Heart left ventricle (tissue), 16 donors: ENCODE measurements at regions of chr6 and their contacts with region 1.

Region 1: DNA sequence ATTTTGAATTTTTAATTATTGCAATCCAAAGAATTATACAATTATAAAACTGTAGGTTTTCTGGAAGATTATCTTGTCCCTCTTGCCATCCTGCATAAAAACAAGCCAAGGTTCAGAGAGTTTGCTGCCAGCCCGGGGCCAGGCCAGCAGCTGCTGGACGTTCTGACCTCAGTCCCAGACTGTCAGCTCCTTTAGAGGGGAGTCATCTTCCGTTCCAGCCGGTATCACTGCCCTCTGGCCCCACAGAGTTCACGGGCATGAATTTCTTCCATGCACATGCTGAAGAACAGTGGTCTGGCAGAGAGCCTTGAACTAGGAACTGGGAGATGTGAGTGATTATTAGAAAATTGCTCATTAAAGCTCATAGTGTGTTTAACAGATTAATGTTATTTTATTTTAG is 130.4 kb upstream of the QKI start:
- DNase-seq: no peak
- ATAC-seq: no peak
- H3K4me3 ChIP-seq: no peak overlapping the region
- H3K27ac ChIP-seq: no peak overlapping the region
- H3K4me1 ChIP-seq: peaks cover 0 to 11% (median 0%) of the 10 kb centered on the region in 12 donors
- H3K27me3 ChIP-seq: no peaks in the 10 kb centered on the region
- CTCF ChIP-seq: no peak
- POLR2A ChIP-seq: no peak

Region 2: DNA sequence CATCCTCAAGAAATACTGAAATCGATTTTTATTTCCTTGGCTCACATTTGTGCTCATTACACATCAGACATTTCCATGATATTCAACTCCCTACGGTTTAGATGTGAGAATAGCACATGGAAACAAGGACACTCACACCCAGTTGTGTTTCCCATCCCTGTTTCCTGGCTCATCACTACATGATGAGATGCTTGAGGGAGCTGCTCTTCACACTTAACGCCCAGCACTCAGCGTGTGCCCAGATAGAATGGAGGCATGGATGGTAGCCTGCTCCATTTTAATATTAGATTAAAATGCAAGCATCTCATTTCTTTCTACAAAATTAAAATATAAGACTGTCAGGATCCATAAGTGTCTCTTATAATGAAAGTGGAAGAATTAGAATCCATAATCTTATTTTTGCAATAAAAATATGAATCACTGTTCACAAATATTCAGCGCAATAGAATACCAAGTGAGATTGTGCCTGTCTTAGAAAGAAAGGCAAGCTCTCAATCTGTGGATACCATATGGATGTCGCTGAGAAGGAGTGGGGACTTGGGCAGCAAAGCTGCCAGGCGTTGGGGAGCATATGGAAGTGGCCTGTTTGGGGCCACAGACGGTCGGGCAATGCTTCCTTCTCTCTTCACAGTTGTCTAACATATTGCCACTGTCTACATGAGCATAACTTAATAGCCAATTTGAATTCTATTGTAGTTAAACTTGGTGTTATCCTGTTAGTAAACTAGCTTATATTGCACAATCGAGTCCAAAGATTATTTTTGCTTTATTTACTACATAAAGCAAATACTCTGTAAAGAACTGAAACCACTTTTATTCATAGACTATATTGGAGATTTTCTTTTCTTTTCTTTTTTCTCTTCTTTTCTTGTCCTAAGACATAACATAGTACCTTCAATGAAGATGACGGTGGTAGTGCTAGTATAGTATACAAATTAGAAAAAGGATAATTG is 76.4 kb before region 1 on chr6:
- intact Hi-C with region 1: loop called in 1 of 10 experiments (anchors 5 kb)
- DNase-seq: no peak
- ATAC-seq: no peak
- H3K4me3 ChIP-seq: no peak overlapping the region
- H3K27ac ChIP-seq: peak overlapping the region in 6 of 12 donors; percentile 22 to 91 (median 81)
- H3K4me1 ChIP-seq: peaks cover 0 to 7% (median 0%) of the 10 kb centered on the region in 12 donors
- H3K27me3 ChIP-seq: no peaks in the 10 kb centered on the region
- CTCF ChIP-seq: no peak
- POLR2A ChIP-seq: no peak

Region 3: GRCh38 chr6:163324411-163325389 is 40.5 kb after region 1 on chr6:
- intact Hi-C with region 1: no loop called
- DNase-seq: peak in 2 of 5 donors; percentile 58 to 68
- ATAC-seq: peak in 3 of 4 donors; percentile 62 to 69 (median 69)
- H3K4me3 ChIP-seq: no peak overlapping the region
- H3K27ac ChIP-seq: peak overlapping the region in 4 of 12 donors; percentile 4 to 32 (median 18)
- H3K4me1 ChIP-seq: peaks cover 0 to 33% (median 21%) of the 10 kb centered on the region in 12 donors
- H3K27me3 ChIP-seq: no peaks in the 10 kb centered on the region
- CTCF ChIP-seq: no peak
- POLR2A ChIP-seq: no peak